ENCODE measurements at regions of chr12 and their contacts with region 1.

Region 1: DNA sequence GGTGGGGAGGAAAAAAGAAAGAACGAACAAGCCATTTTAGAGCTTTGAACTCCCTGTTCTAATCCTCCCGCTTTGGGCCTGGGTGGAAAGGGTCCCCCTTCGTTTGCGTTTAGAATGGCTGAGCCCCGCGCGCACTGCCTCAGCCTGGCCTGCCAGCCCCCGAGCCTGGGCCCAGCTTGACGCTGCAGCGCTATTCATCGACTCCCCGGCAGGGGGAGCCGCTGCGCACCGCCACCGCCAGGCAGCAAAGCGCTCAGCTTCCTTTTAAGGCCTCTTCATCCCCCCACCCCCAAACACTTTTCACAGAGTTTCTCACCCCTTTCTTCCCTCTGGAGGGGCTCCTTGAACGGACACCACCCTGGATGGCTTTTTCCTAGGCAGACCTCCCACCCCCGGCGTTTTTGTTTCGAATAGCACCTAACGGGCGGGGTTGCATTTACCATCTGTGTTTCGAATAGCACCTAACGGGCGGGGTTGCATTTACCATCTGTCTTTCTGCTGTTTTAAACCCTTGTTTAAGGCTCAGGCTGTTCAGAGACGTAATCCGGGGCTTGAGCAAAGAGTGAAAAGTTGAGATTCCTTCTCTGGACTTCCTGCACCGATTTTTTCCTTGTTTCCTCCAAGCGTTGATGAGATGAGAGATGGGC is 56.4 kb upstream of the PIWIL1 start:
- DNase-seq: peak; percentile 29 to 95
- H3K4me3 ChIP-seq: no peak overlapping the region
- H3K27ac ChIP-seq: no peak overlapping the region
- H3K4me1 ChIP-seq: 0 out of 7 replicates have a peak, but pooled peaks cover 0 to 2% (median 0%) of the 10 kb centered on the region in 4 experiments
- H3K27me3 ChIP-seq: peaks cover 0 to 2% (median 0%) of the 10 kb centered on the region in 4 experiments; a peak in 2 of 7 replicates
- CTCF ChIP-seq: peak; percentile 87 to 95 (median 89)
- EP300 ChIP-seq: no peak
- POLR2A ChIP-seq: no peak
- RAD21 ChIP-seq: peak; percentile 59 to 73

Region 2: GRCh38 chr12:130041983-130042812 is 239.1 kb before region 1 on chr12:
- CTCF ChIA-PET with region 1: interaction called, 11 read pairs
- POLR2A ChIA-PET with region 1: no interaction called
- DNase-seq: peak in 1 of 2 experiments; percentile 99
- H3K4me3 ChIP-seq: peak overlapping the region in 1 of 4 experiments; percentile 29; a peak in 1 of 8 replicates
- H3K27ac ChIP-seq: no peak overlapping the region
- H3K4me1 ChIP-seq: peaks cover 0 to 13% (median 5%) of the 10 kb centered on the region in 4 experiments; a peak in 5 of 7 replicates
- H3K27me3 ChIP-seq: peaks cover 22 to 81% (median 55%) of the 10 kb centered on the region in 4 experiments
- CTCF ChIP-seq: peak; percentile 91 to 95 (median 93)
- EP300 ChIP-seq: no peak
- POLR2A ChIP-seq: no peak
- RAD21 ChIP-seq: peak; percentile 82 to 92

Region 3: DNA sequence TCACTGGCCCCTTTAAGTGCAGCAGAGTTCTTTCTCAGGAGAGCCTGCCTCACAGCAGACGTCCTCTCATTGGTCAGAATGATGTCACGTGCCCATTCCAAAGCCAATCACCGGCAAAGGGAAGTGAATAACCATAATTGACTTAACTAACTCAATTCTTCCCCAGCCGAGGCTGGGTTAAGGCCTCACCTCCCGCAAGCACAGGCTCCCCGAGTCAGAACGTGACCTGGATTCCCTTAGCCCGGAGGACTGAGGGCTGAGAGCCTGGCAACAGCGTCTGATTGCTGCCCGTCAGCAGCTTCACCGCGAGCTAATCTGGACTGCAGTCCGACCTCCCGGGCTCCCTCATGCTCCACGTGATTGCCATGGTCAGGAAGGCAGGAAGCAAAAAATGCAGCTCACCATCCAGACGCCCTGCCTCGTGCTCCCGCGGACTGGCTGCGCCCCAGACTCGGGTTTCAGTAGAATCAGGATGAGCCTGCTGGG is 211.1 kb before region 1 on chr12:
- CTCF ChIA-PET with region 1: interaction called, 11 read pairs
- POLR2A ChIA-PET with region 1: no interaction called
- DNase-seq: no peak
- H3K4me3 ChIP-seq: no peak overlapping the region
- H3K27ac ChIP-seq: no peak overlapping the region
- H3K4me1 ChIP-seq: peaks cover 0 to 4% (median under 1%) of the 10 kb centered on the region in 4 experiments; a peak in 2 of 7 replicates
- H3K27me3 ChIP-seq: peaks cover 0 to 24% (median 14%) of the 10 kb centered on the region in 4 experiments; a peak in 4 of 7 replicates
- CTCF ChIP-seq: no peak
- EP300 ChIP-seq: no peak
- POLR2A ChIP-seq: no peak
- RAD21 ChIP-seq: no peak

Region 4: DNA sequence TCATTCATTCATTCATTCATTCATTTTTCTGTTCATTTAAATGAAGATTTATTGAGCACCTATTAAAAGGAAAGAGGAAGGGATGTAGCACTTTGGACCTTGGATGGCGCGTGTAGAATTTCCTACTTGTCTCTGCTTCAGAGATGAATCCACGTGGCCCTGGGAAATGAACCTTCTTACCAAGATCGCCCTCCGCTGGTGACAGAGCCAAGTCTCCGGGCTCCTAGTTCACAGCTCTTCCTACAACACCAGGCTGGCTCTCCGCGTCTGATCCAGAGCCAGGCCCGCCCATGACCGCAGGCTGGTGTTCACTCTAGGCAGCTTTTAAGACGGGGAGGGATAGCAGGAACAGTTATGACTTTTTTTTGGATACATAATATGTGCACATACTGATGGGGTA is 14.5 kb before region 1 on chr12:
- CTCF ChIA-PET with region 1: interaction called, 37 read pairs
- POLR2A ChIA-PET with region 1: no interaction called
- DNase-seq: peak; percentile 44 to 66
- H3K4me3 ChIP-seq: no peak overlapping the region
- H3K27ac ChIP-seq: no peak overlapping the region
- H3K4me1 ChIP-seq: no peaks in the 10 kb centered on the region
- H3K27me3 ChIP-seq: peaks cover 0 to 14% (median 5%) of the 10 kb centered on the region in 4 experiments; a peak in 4 of 7 replicates
- CTCF ChIP-seq: peak; percentile 59 to 83 (median 64)
- EP300 ChIP-seq: no peak
- POLR2A ChIP-seq: no peak
- RAD21 ChIP-seq: peak; percentile 76 to 82

Region 5: DNA sequence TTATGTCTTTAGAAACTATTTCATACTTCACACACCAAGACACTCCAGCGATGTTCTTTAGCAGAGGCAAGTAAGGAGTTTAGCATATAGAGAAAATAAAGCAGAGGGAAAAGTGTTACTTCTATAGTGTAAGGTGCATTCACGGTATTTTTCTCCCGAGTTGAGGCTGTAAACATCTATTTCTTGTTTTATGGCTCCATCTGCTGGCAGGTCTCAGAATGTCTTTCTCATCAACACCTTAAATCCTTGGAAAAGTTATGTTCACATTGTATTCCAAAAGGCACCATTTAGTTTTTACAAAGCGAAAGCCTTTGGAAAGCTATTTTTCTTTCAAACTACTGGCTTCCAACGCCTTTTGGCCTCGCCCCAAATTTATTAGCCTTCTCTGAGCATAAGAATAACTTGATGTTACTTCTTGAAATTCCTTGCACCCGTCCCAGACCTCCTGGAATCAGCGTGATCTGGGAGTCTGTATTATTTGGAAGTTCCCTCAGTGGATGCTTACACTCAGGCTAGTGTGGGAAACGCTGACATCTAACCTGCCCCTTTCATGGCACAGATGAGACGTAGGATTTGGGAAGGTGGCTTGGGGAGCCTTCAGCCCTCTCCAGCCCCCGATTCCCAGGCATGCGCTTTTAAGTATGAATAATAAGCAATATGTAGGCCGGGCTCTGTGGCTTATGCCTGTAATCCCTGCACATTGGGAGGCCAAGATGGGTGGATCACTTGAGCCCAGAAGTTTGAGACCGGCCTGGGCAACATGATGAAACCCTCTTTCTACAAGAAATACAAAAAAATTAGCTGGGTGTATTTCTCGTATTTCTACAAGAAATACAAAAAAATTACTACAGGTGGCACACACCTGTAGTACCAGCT is 54.5 kb after region 1 on chr12:
- CTCF ChIA-PET with region 1: interaction called, 30 read pairs
- POLR2A ChIA-PET with region 1: no interaction called
- DNase-seq: peak in 1 of 2 experiments; percentile 55
- H3K4me3 ChIP-seq: no peak overlapping the region
- H3K27ac ChIP-seq: no peak overlapping the region
- H3K4me1 ChIP-seq: peaks cover 0 to 7% (median 6%) of the 10 kb centered on the region in 4 experiments; a peak in 6 of 7 replicates
- H3K27me3 ChIP-seq: peaks cover 0 to 8% (median 2%) of the 10 kb centered on the region in 4 experiments; a peak in 3 of 7 replicates
- CTCF ChIP-seq: peak in 2 of 3 experiments; percentile 65 to 67; a peak in 2 of 4 replicates
- EP300 ChIP-seq: no peak
- POLR2A ChIP-seq: no peak
- RAD21 ChIP-seq: peak; percentile 90 to 94

Measured in H1 (cell line).